Activated T-helper 1 cell treated with anti-CD3 and anti-CD28 coated beads, Interleukin-12 subunit alpha, Interleukin-12 subunit beta, Interleukin-2, Interleukin-4 antibody, amounts not matched to agents 30 ng/mL and 10 ng/mL and 1 ng/mL, durations not matched to agents 14 hours and 24 hours and 36 hours (primary cell): ENCODE measurements at regions of chr5 and their contacts with region 1.

Region 1: GRCh38 chr5:96934708-96935558 is 947 bp upstream of the LNPEP start:
- DNase-seq: peak; percentile 96
- H3K4me3 Mint-ChIP-seq: peak overlapping the region; percentile 97
- H3K27ac Mint-ChIP-seq: peak overlapping the region; percentile 98
- H3K4me1 Mint-ChIP-seq: peaks cover 67% of the 10 kb centered on the region
- H3K27me3 Mint-ChIP-seq: no peaks in the 10 kb centered on the region

Region 2: GRCh38 chr5:96536991-96537785 is 397.7 kb before region 1 on chr5:
- intact Hi-C with region 1: loop called (anchors 10 kb)
- DNase-seq: peak; percentile 32
- H3K4me3 Mint-ChIP-seq: no peak overlapping the region
- H3K27ac Mint-ChIP-seq: peak overlapping the region; percentile 78
- H3K4me1 Mint-ChIP-seq: peaks cover 26% of the 10 kb centered on the region
- H3K27me3 Mint-ChIP-seq: peaks cover 3% of the 10 kb centered on the region

Region 3: DNA sequence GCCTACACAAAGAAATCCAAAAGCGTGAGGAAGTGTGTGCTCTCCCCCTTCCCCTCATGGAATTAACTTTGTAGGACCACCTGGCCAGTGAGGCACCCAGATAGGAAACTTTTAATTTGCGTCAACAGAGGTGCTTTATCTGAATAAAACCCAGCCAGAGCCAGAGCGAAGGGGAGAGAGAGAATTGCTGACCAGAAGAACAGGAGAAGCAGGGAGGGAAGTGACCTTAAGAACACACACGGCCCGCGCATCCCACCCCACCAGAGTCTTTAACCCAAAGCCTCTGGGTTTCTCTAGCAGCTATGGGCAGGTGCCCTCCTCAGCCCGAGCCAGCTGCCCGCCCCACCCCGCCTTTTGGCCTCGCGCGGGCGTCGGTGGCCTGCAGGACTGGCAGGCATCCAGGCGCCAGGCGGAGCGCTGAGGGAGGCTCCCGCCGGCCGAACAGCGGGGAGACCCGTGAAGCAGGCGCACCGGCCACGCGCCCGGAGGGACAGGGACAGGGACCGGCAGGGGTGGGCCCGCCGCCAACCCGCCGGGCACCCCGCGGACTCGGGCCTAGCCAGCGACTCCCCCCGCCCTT is 127.8 kb before region 1 on chr5:
- intact Hi-C with region 1: loop called (anchors 1 kb)
- DNase-seq: no peak
- H3K4me3 Mint-ChIP-seq: peak overlapping the region; percentile 99
- H3K27ac Mint-ChIP-seq: peak overlapping the region; percentile 95
- H3K4me1 Mint-ChIP-seq: peaks cover 81% of the 10 kb centered on the region
- H3K27me3 Mint-ChIP-seq: no peaks in the 10 kb centered on the region

Region 4: GRCh38 chr5:96919754-96920197 is 15.2 kb before region 1 on chr5:
- intact Hi-C with region 1: loop called (anchors 1 kb)
- DNase-seq: no peak
- H3K4me3 Mint-ChIP-seq: no peak overlapping the region
- H3K27ac Mint-ChIP-seq: no peak overlapping the region
- H3K4me1 Mint-ChIP-seq: peaks cover 41% of the 10 kb centered on the region
- H3K27me3 Mint-ChIP-seq: no peaks in the 10 kb centered on the region

Region 5: GRCh38 chr5:96973532-96974401 is 38.8 kb after region 1 on chr5:
- intact Hi-C with region 1: loop called (anchors 1 kb)
- DNase-seq: no peak
- H3K4me3 Mint-ChIP-seq: peak overlapping the region; percentile 34
- H3K27ac Mint-ChIP-seq: peak overlapping the region; percentile 27
- H3K4me1 Mint-ChIP-seq: peaks cover 60% of the 10 kb centered on the region
- H3K27me3 Mint-ChIP-seq: no peaks in the 10 kb centered on the region

Region 6: GRCh38 chr5:97142521-97143254 is 207.8 kb after region 1 on chr5 and contains the start of gene LIX1:
- intact Hi-C with region 1: loop called (anchors 2 kb)
- DNase-seq: no peak
- H3K4me3 Mint-ChIP-seq: no peak within 1 kb of the TSS
- H3K27ac Mint-ChIP-seq: no peak within 1 kb of the TSS
- H3K4me1 Mint-ChIP-seq: peaks cover 7% of the 10 kb centered on the region
- H3K27me3 Mint-ChIP-seq: peaks cover 28% of the 10 kb centered on the region
- total RNA-seq, gene LIX1: not detected in 2 replicates